Activated CD8-positive, alpha-beta T cell treated with anti-CD3 and anti-CD28 coated beads for 36 hours (primary cell): ENCODE measurements at regions of chr10 and their contacts with region 1.

Region 1: DNA sequence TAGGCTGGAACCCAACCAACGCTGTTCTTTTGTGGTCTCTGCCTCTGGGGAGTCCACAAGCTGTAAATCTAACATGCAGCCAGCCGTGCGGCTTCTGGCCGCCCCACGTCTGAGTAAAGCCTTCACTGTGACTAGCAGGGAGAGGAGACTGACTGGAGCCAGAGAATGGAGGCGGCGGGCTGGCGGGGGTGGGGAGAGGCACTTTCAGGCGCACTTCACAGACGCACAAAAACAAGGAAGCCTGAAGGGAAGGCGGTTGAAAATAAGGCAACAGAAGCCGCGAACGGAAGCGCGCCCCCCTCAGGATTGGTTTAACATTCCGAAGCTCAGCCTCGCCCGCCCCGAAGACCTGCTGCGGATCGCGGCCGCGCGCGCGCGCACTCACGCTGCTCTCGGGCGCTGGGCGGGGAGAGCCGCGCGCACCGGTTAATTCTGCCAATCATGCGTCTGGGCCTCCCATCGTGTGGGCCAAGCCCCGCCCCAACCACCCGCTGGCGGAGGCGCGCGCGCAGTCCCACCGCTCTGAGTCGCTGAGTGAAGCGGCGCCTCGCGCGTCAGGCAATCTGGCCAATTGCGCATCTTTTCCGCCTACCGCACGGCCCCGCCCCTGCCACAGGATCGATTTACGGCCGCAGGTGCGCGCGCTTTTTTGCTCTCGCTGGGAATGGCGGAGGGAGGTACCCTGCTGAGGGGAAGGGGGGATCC is at the start of gene SFR1:
- DNase-seq: peak; percentile 99
- ATAC-seq: peak; percentile 95
- H3K4me3 Mint-ChIP-seq: peak within 1 kb of the TSS; percentile 85
- H3K27ac Mint-ChIP-seq: peak within 1 kb of the TSS; percentile 98
- H3K4me1 Mint-ChIP-seq: peaks cover 25% of the 10 kb centered on the region
- H3K27me3 Mint-ChIP-seq: no peaks in the 10 kb centered on the region
- CTCF ChIP-seq: peak; percentile 37
- total RNA-seq, gene SFR1: 16.8 to 17.9 TPM

Region 2: GRCh38 chr10:103918053-103918846 is 203.4 kb before region 1 on chr10 and contains the start of gene STN1:
- CTCF ChIA-PET with region 1: interaction called, 6 read pairs
- POLR2A ChIA-PET with region 1: interaction called, 11 read pairs
- intact Hi-C with region 1: loop called (anchors 10 kb)
- DNase-seq: peak; percentile 98
- ATAC-seq: peak; percentile 93
- H3K4me3 Mint-ChIP-seq: peak within 1 kb of the TSS; percentile 92
- H3K27ac Mint-ChIP-seq: peak within 1 kb of the TSS; percentile 97
- H3K4me1 Mint-ChIP-seq: peaks cover 28% of the 10 kb centered on the region
- H3K27me3 Mint-ChIP-seq: no peaks in the 10 kb centered on the region
- CTCF ChIP-seq: no peak
- total RNA-seq, gene STN1: 32.1 to 32.4 TPM

Region 3: DNA sequence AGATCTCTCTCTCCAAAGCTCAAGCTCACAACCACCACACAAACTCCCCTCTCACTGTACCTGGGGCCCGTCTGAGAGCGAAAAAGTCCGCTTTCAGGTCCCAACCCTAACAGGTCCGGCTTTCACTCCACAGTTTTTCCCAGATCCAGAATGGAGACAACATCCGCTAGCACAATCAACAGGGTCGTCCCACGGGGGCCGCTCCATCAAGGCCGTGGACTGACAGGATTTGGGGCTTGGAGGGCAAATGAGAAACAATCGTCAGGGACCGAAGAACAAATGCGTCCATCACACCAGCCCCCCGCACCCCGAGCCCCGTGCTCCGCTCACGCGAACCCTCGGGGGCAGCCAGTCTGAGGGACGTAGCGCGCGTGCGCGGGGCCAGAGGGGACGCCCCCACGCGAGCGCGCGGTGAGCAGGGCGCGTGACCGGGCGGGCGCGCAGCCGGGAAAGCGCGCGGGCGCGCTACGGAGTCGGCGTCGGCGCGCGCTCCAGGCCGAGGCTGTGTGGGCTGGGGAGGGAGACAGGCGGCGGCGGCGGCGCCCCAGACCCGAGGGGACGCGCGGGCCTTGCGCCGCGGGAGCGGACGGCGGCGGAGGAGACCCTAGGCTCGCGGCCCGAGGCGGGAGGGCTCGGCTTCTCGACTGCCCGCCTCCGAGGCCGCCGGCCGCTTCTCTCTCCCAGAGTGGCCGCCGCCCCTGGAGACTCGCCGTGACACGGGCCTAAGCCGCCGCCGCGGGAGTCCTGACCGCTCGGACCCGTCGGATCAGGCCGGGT is 154.8 kb before region 1 on chr10 and contains the start of gene SLK:
- CTCF ChIA-PET with region 1: interaction called, 5 read pairs
- POLR2A ChIA-PET with region 1: interaction called, 7 read pairs
- intact Hi-C with region 1: loop called (anchors 5 kb)
- DNase-seq: peak; percentile 82
- ATAC-seq: peak; percentile 83
- H3K4me3 Mint-ChIP-seq: peak within 1 kb of the TSS; percentile 93
- H3K27ac Mint-ChIP-seq: peak within 1 kb of the TSS; percentile 93
- H3K4me1 Mint-ChIP-seq: peaks cover 32% of the 10 kb centered on the region
- H3K27me3 Mint-ChIP-seq: no peaks in the 10 kb centered on the region
- CTCF ChIP-seq: no peak
- total RNA-seq, gene SLK: 17.8 to 19.2 TPM

Region 4: DNA sequence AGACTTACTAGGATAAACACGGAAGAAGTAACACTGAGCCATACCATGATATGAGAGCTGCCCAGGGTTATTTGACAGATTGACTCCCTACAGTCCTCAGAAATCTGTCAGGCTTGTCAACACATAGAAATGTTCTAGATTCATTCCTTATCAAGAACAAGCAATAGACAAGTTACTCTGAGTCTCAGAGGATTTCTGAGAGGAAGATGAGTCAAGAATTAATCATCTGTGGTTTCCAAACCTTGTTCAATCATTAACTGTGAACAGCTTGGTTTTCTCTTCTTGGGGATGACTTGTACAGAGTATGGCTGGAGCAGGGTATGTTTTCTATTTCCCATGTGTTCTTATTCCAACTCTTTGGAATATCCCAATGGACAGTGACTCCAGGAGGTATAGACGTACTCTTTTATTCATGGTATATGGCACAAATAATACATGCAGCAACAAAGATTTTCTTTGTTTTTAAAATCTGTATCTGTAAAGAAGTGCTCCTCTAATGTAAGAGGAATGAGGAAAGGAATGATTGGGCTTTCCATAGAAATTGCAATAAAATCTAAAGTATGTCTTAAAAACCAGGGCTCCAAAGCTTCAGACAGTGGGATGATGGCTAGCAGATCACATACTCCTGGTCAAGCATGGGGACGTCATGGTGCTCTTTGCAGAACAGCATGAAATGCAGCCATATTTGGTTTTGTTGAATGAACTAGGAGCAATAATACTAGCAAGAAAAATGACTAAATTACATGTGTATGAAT is 11.6 kb before region 1 on chr10:
- CTCF ChIA-PET with region 1: interaction called, 8 read pairs
- POLR2A ChIA-PET with region 1: interaction called, 11 read pairs
- intact Hi-C with region 1: no loop called
- DNase-seq: no peak
- ATAC-seq: peak; percentile 81
- H3K4me3 Mint-ChIP-seq: no peak overlapping the region
- H3K27ac Mint-ChIP-seq: no peak overlapping the region
- H3K4me1 Mint-ChIP-seq: peaks cover 12% of the 10 kb centered on the region
- H3K27me3 Mint-ChIP-seq: no peaks in the 10 kb centered on the region
- CTCF ChIP-seq: no peak

Region 5: DNA sequence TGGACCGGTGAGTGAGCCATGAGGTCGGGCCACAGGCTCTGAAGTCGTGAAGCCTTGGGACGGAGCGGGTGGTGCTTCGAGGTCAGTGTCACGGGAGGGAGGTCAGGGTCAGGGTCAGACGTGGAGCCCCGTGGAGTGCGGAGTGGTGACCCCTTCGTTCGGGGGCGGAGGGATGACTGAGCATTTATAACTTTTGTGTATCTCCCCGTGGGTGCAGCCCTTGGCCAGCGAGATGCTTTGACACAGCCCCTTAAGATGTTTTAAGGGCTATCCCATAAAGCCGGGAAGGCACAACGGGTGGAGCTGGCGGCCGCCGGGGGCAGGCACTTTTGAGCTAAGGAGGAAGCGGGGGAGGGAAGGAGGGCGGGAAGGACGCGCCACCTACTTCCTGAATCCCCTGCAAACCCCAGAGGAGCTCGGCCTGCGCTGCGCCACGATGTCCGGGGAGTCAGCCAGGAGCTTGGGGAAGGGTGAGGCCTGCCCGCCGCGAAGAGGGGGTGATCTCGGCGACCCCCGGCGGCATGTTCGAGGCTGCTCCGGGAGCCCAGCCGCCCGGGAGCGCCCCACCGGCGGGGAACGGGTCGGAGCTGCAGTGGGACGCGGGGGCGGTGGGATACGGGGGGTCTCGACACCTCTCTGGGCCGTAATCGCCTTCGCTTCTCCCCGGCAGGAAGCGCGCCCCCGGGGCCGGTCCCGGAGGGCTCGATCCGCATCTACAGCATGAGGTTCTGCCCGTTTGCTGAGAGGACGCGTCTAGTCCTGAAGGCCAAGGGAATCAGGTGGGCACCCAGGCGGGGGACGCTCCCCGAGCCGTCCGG is 133.0 kb after region 1 on chr10 and contains the start of gene GSTO1:
- CTCF ChIA-PET with region 1: interaction called, 10 read pairs
- POLR2A ChIA-PET with region 1: interaction called, 7 read pairs
- intact Hi-C with region 1: no loop called
- DNase-seq: peak; percentile 64
- ATAC-seq: peak; percentile 61
- H3K4me3 Mint-ChIP-seq: peak within 1 kb of the TSS; percentile 86
- H3K27ac Mint-ChIP-seq: peak within 1 kb of the TSS; percentile 96
- H3K4me1 Mint-ChIP-seq: peaks cover 48% of the 10 kb centered on the region
- H3K27me3 Mint-ChIP-seq: peaks cover 4% of the 10 kb centered on the region
- CTCF ChIP-seq: no peak
- total RNA-seq, gene GSTO1: 179 to 189 TPM

Region 6: DNA sequence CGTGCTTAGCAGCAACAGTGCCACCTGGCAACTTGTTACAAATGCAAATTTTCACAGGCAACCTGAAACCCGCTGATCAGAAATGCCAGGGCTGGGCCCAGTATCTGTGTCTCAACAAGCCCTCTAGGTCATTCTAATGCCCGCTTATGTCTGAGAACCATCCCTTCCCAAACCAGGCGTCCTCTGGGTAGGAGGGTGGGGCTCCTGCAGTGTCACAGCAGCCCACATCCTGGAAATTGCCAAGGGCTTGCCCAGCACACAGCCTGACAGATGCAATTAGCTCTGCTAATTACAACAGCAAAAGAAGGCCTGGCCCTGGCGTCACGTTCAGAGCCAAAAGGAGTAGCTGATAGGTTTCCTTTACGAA is 200.7 kb after region 1 on chr10:
- CTCF ChIA-PET with region 1: no interaction called
- POLR2A ChIA-PET with region 1: no interaction called
- intact Hi-C with region 1: no loop called
- DNase-seq: peak; percentile 69
- ATAC-seq: peak; percentile 66
- H3K4me3 Mint-ChIP-seq: peak overlapping the region; percentile 16
- H3K27ac Mint-ChIP-seq: peak overlapping the region; percentile 82
- H3K4me1 Mint-ChIP-seq: peaks cover 88% of the 10 kb centered on the region
- H3K27me3 Mint-ChIP-seq: no peaks in the 10 kb centered on the region
- CTCF ChIP-seq: no peak